ENCODE measurements at regions of chr20 and their contacts with region 1.

Region 1: DNA sequence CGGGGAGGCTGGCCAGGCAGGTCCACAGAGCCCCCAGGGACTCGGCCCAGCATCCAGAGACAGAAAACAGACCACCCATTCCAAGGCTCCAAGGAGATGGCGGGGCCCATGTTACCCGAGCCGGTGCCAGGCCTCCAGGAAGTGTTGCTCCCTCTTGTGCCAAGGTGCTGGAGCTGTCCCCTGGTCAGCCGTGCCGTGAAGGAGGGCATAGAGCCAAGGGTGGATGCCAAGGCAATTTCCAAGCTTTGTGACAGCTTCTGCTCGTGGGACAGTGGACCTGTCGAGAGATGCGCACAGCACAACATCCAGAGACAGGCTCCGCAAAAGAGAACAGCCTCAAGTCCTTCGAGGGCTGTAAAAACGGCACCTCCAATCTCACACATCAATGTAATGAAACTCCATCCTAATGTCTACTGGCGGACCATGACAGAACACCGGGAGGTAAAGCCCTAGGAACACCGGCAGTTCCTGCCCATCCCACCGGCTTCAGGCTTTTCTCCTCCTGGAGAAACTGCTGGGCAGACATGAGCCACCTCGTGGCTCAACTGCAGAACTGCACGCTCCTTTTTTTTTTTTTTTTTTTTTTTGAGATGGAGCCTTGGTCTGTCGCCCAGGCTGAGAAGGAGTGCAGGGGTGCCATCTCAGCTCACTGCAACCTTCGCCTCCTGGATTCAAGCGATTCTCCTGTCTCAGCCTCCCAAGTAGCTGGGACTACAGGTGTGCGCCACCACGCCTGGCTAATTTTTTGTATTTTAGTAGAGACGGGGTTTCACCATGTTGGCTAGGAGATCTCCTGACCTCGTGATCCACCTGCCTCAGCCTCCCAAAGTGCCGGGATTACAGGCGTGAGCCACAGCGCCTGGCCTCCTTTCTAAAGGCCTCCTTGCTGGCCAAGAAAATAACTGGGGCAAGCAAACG is 30.9 kb upstream of the AVP start:
- DNase-seq: peak; percentile 33 to 46
- H3K4me3 ChIP-seq: no peak overlapping the region
- H3K27ac ChIP-seq: no peak overlapping the region
- H3K4me1 ChIP-seq: no peaks in the 10 kb centered on the region
- H3K27me3 ChIP-seq: no peaks in the 10 kb centered on the region
- CTCF ChIP-seq: peak; percentile 81

Region 2: GRCh38 chr20:3068986-3069900 is 46.2 kb before region 1 on chr20:
- CTCF ChIA-PET with region 1: interaction called, 19 read pairs
- POLR2A ChIA-PET with region 1: no interaction called
- intact Hi-C with region 1: no loop called
- DNase-seq: peak; percentile 67 to 92
- H3K4me3 ChIP-seq: no peak overlapping the region
- H3K27ac ChIP-seq: peak overlapping the region; percentile 68
- H3K4me1 ChIP-seq: peaks cover 54% of the 10 kb centered on the region
- H3K27me3 ChIP-seq: no peaks in the 10 kb centered on the region
- CTCF ChIP-seq: no peak; the same call in 1 of the 2 replicates

Region 3: DNA sequence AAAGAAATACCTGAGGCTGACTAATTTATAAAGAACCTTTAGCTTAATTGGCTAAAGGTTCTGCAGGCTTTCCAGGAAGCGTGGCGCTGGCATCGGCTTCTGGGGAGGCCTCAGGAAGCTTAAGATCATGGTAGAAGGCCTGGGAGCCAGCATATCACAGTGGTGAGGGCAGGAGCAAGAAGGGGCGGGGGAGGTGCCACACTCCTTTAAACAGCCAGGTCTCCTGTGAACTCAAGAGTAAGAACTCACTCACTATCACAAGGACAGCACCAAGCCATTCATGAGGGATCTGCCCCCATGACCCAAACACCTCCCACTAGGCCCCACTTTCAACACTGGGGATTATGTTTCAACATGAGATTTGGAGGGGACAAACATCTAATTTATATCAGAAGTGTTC is 157.9 kb after region 1 on chr20:
- CTCF ChIA-PET with region 1: no interaction called
- POLR2A ChIA-PET with region 1: no interaction called
- intact Hi-C with region 1: no loop called
- DNase-seq: no peak
- H3K4me3 ChIP-seq: no peak overlapping the region
- H3K27ac ChIP-seq: no peak overlapping the region
- H3K4me1 ChIP-seq: no peaks in the 10 kb centered on the region
- H3K27me3 ChIP-seq: no peaks in the 10 kb centered on the region
- CTCF ChIP-seq: no peak

Region 4: GRCh38 chr20:3371754-3372153 is 256.3 kb after region 1 on chr20:
- CTCF ChIA-PET with region 1: interaction called, 13 read pairs
- POLR2A ChIA-PET with region 1: no interaction called
- intact Hi-C with region 1: no loop called
- DNase-seq: no peak
- H3K4me3 ChIP-seq: no peak overlapping the region
- H3K27ac ChIP-seq: no peak overlapping the region
- H3K4me1 ChIP-seq: no peaks in the 10 kb centered on the region
- H3K27me3 ChIP-seq: no peaks in the 10 kb centered on the region
- CTCF ChIP-seq: no peak